IMR-90 (cell line): ENCODE measurements at regions of chr1 and their contacts with region 1.

Region 1: DNA sequence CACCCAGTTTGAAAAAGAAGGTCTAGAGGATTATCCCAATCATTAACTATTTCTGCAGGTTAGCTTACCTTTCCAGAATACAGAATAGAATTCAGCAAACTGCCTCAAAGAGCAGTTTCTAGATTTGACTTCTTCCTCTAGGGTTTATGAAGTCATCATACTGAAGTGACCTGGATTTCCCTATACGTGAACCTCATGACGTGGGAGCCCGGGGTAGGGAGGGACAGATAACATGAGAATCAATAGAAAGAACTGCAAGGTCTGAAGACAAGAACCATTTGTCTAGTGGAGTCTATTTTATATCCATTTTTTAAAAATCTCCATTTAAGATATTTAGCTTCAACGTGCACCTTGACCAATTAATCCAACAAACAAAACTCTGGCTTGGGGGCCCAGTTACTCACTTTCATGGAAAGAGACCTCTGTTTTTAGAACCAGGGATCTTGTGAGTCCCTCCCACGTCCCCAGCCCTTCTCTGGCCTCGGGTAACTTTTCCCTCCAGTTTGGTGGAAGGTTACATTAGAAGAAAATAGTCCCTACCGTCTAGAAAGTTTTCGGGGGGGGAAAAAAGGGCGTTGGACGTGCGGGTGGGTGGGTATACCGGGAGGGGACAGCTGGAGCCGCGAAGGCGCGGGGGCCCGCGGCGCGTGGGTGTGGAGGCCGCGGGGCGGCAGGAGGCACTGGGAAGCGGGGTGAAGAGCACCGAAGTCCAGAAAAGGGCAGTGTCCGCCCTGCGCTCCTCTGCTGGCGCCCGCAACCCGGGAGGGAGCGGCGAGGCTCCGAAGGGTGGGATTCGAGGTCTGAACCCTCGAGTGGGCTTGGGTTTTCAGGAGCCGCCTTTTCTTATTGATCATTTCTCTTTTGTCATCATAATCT is 13.8 kb upstream of the POGZ start:
- DNase-seq: peak; percentile 34
- ATAC-seq: peak; percentile 74
- H3K4me3 ChIP-seq: peak overlapping the region; percentile 38
- H3K27ac ChIP-seq: peak overlapping the region; percentile 42
- H3K4me1 ChIP-seq: no peaks in the 10 kb centered on the region
- H3K27me3 ChIP-seq: no peaks in the 10 kb centered on the region
- CTCF ChIP-seq: no peak
- POLR2A ChIP-seq: no peak
- RAD21 ChIP-seq: no peak

Region 2: DNA sequence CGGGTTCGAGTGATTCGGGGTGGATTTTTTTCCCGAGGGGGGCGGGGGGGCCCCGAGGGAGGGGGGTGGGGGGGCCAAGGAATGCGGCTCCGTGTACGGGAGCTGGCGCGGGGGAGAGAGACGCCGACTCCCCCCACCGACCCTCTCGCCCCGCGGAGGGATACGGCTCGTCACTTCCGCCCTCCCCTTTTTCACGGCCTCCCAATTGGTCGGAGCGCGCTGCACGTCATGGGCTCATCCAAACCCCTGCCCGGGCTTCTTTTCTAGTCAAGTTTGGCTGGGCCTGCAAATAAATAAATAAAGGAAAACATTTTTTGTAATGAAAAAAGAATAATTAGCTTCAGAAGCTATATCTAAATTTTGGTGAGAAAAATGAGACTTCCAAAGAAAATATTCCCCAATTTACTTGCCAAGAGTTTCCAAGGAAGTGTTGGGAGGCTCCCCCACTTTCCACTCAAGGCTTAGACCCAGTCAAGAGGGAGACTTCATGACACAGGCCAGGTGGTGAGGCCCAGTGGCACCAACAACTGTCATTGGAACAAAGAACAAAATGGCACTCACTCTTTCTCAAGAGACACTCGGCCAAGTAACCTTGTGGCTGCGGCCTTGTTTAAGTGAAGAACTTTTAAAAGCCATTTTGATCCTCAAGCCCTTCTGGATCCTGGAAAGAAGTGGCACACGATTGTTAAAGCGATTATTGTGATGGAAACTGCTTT is 13.6 kb before region 1 on chr1 and contains the start of gene POGZ:
- CTCF ChIA-PET with region 1: interaction called, 3 read pairs
- POLR2A ChIA-PET with region 1: interaction called, 4 read pairs
- dilution Hi-C with region 1: no loop called
- in situ Hi-C with region 1: no loop called
- intact Hi-C with region 1: loop called (anchors 1 kb)
- DNase-seq: peak; percentile 98
- ATAC-seq: peak; percentile 84
- H3K4me3 ChIP-seq: peak within 1 kb of the TSS; percentile 95
- H3K27ac ChIP-seq: peak within 1 kb of the TSS; percentile 100
- H3K4me1 ChIP-seq: peaks cover 5% of the 10 kb centered on the region
- H3K27me3 ChIP-seq: peaks cover 8% of the 10 kb centered on the region
- CTCF ChIP-seq: no peak
- POLR2A ChIP-seq: peak; percentile 64; the same call in 1 of the 2 replicates
- RAD21 ChIP-seq: no peak
- total RNA-seq, gene POGZ: 15.0 and 20.8 TPM in 2 replicates

Region 3: DNA sequence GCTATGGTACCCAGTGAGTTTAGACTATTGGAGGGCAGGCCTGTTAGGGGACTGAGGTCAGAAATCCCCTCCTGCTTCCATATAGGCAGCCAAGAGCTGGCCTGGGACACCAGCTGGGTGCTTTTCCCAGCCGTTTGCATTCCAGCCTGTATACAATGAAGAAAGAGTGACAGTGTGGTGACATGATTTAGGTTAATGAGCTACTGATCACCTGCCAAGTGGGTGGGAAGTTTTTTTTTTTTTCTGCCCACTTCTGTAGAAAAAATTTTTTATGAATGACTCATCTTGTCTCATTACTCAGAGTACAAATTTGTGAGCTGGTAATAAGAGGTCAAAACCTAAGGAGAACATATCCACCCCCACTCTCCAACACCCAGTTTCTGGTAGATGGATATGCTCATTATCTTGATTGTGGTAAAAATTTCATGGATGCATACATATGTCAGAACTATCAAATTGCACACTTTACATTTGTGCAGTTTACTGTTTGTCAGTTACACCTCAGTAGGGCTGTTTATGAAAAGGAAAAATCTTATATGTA is 21.7 kb after region 1 on chr1:
- CTCF ChIA-PET with region 1: no interaction called
- POLR2A ChIA-PET with region 1: no interaction called
- dilution Hi-C with region 1: no loop called
- in situ Hi-C with region 1: no loop called
- intact Hi-C with region 1: no loop called
- DNase-seq: peak; percentile 56
- ATAC-seq: peak; percentile 79
- H3K4me3 ChIP-seq: no peak overlapping the region
- H3K27ac ChIP-seq: no peak overlapping the region
- H3K4me1 ChIP-seq: peaks cover 3% of the 10 kb centered on the region
- H3K27me3 ChIP-seq: peaks cover 7% of the 10 kb centered on the region
- CTCF ChIP-seq: no peak
- POLR2A ChIP-seq: no peak
- RAD21 ChIP-seq: no peak

Region 4: GRCh38 chr1:151510957-151511635 is 38.0 kb after region 1 on chr1 and contains the start of gene CGN:
- CTCF ChIA-PET with region 1: no interaction called
- POLR2A ChIA-PET with region 1: no interaction called
- dilution Hi-C with region 1: no loop called
- in situ Hi-C with region 1: no loop called
- intact Hi-C with region 1: loop called (anchors 5 kb)
- DNase-seq: peak; percentile 75
- ATAC-seq: peak; percentile 99
- H3K4me3 ChIP-seq: peak within 1 kb of the TSS; percentile 54
- H3K27ac ChIP-seq: no peak within 1 kb of the TSS
- H3K4me1 ChIP-seq: peaks cover 4% of the 10 kb centered on the region
- H3K27me3 ChIP-seq: peaks cover 33% of the 10 kb centered on the region
- CTCF ChIP-seq: no peak
- POLR2A ChIP-seq: no peak
- RAD21 ChIP-seq: no peak
- total RNA-seq, gene CGN: 0.28 and 0.36 TPM in 2 replicates